SK-N-SH (cell line): ENCODE measurements at regions of chr5 and their contacts with region 1.

Region 1: GRCh38 chr5:14399054-14399692 is 182.4 kb upstream of the OTULINL start:
- DNase-seq: peak; percentile 56
- H3K4me3 ChIP-seq: no peak overlapping the region; a peak in 1 of 4 replicates
- H3K27ac ChIP-seq: peak overlapping the region; percentile 89 to 96
- H3K4me1 ChIP-seq: peaks cover 53 to 55% of the 10 kb centered on the region in 2 experiments
- H3K27me3 ChIP-seq: no peaks in the 10 kb centered on the region
- CTCF ChIP-seq: peak; percentile 87
- EP300 ChIP-seq: no peak
- RAD21 ChIP-seq: peak; percentile 83

Region 2: GRCh38 chr5:14332746-14333145 is 66.4 kb before region 1 on chr5:
- CTCF ChIA-PET with region 1: no interaction called
- POLR2A ChIA-PET with region 1: no interaction called
- DNase-seq: no peak
- H3K4me3 ChIP-seq: no peak overlapping the region
- H3K27ac ChIP-seq: no peak overlapping the region
- H3K4me1 ChIP-seq: no peaks in the 10 kb centered on the region; a peak in 1 of 4 replicates
- H3K27me3 ChIP-seq: no peaks in the 10 kb centered on the region
- CTCF ChIP-seq: no peak
- EP300 ChIP-seq: no peak
- RAD21 ChIP-seq: no peak

Region 3: DNA sequence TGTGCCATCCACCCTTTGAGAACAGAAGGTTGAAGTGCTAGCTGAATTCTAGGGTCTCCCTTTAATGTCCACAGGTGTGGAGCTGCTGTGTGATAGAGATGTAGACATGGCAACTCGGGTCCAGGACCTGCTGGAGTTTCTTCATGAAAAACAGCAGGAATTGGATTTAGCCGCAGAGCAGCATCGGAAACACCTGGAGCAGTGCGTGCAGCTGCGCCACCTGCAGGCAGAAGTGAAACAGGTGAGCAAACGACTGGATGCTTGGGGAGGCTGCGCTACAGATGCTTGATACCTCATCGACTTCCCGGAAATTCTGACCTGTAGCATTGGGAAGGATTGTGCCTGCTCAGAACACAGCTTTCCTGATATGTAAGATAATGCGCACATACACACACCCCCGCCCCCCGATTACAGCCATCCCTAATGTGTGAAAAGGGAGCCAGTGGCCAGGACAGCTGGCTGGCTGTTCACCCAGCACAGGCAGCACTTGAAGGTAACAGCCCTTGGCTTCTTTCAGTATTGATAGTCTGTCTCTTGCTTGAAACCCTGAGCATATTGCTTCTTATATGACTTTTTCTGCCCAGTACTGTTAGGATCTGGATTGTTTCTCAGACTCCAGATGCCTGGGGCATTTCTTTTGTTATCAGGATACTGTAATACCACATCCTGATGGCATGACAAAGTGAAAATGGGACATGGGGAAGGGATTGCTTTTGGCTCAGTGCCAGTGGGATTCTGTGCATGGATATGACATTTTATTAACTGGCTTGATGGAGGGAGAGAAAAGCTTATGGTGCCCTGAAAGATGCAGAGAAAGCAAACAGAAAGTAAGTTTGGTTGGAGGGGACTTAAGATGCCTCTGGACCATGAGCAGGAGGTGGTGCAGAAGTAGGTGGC is 34.3 kb before region 1 on chr5:
- CTCF ChIA-PET with region 1: interaction called, 22 read pairs
- POLR2A ChIA-PET with region 1: no interaction called
- DNase-seq: peak; percentile 59
- H3K4me3 ChIP-seq: no peak overlapping the region
- H3K27ac ChIP-seq: peak overlapping the region in 1 of 2 experiments; percentile 28; a peak in 1 of 4 replicates
- H3K4me1 ChIP-seq: peaks cover 0 to 11% of the 10 kb centered on the region in 2 experiments; a peak in 2 of 4 replicates
- H3K27me3 ChIP-seq: no peaks in the 10 kb centered on the region
- CTCF ChIP-seq: peak; percentile 60
- EP300 ChIP-seq: no peak
- RAD21 ChIP-seq: no peak

Region 4: DNA sequence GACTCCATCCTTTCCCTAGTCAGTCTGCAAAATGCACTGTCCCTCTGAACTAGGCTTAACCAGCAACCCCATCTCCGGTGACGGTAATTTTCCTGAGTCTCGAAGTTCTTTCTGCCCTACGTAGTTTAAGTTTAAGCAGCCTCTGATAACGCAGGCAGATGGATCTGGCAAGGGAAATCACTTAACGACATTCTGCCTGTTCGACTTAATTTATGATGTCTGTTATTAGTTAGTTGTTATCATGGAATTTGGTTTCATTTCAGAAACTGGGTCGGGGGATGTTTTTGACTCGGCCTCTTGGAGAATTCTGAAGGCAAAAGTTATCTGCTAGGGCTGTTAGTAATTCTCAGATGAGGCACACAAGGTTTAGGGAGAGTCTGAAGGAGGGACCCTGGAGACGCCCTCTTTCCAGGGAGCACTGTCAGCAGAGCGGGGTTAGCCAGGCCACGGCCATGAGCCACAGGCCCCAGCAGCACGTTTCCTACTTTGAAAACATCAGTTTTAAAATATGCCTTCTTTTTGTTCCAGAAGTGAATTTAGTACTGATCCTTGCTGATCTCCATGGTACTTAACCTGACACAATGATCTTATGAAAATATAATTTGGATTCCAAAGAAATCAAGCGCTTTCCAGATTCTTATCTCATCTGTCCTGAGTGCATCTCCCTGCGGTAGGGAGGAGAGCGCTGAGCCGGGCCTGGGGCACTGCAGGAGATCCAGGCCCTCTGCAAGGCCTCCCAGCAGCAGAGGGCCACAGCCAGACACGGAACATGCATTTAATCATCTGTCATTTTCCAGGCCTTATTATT is 11.4 kb after region 1 on chr5:
- CTCF ChIA-PET with region 1: interaction called, 15 read pairs
- POLR2A ChIA-PET with region 1: interaction called, 3 read pairs
- DNase-seq: peak; percentile 82
- H3K4me3 ChIP-seq: peak overlapping the region in 1 of 2 experiments; percentile 12; a peak in 3 of 4 replicates
- H3K27ac ChIP-seq: peak overlapping the region; percentile 98 to 100
- H3K4me1 ChIP-seq: peaks cover 49 to 76% of the 10 kb centered on the region in 2 experiments
- H3K27me3 ChIP-seq: no peaks in the 10 kb centered on the region
- CTCF ChIP-seq: no peak; the same call in 1 of the 2 replicates
- EP300 ChIP-seq: peak; percentile 64 to 95
- RAD21 ChIP-seq: peak; percentile 42

Region 5: DNA sequence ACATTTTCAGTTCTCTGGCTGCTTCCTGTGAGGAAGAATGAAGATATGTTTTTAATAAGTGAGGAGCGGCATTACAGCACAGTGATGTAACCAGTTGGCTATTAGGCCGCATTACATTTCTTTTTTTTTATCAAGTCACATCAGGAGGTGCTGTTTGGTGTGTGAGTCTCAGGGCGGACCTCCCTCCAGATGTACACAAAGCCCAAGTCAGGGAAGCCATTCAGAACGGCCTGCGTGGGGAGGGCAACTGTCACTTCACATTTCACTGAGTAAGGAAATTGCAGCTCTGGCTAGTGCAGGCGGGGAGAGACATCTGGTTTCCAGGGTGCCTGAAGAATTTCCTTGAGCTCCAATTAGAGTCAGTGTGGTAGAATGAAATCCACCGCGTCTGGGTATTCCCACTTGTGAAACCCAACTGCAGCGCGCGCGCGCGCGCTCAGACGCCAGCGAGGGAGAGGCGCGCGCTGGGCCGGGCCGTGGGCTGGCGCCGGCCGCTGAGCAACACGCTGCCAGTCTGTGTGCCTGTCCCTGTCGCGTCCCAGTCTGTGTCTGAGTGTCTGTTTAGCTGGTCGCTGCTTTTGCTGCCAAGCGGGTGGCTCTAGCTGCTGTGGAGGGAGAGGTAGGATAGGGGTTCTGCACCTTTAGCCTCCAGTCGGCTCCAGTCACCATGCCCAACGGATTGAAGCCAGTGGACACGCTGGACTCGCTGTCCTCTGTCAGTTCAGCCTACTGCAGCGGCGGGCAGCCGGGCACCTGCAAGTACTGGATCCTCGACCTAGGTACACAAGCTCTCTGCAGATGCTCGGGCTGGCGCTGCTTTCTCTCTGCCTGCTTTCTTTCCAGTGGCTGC is 41.6 kb after region 1 on chr5:
- CTCF ChIA-PET with region 1: interaction called, 18 read pairs
- POLR2A ChIA-PET with region 1: interaction called, 5 read pairs
- DNase-seq: peak; percentile 83
- H3K4me3 ChIP-seq: peak overlapping the region; percentile 80 to 84
- H3K27ac ChIP-seq: peak overlapping the region; percentile 98 to 100
- H3K4me1 ChIP-seq: peaks cover 37 to 38% of the 10 kb centered on the region in 2 experiments
- H3K27me3 ChIP-seq: no peaks in the 10 kb centered on the region
- CTCF ChIP-seq: no peak
- EP300 ChIP-seq: peak; percentile 80 to 87; a peak in 3 of 4 replicates
- RAD21 ChIP-seq: peak; percentile 32

Region 6: DNA sequence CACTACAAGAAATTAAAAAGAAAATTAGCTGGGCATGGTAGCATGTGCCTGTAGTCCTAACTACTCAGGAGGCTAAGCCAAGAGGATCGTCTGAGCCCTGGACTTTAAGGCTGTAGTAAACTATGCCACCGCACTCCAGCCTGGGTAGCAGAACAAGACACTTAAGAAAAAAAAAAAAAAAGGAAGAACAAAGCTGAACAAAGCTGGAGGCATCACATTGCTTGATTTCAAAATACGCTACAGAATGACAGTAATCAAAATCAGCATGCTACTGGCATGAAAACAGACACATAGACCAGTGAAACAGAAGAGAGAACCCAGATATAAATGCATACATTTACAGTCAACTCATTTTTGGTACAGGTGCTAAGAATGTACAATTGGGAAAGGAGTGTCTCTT is 250.9 kb after region 1 on chr5:
- CTCF ChIA-PET with region 1: interaction called, 100 read pairs
- POLR2A ChIA-PET with region 1: interaction called, 3 read pairs
- DNase-seq: no peak
- H3K4me3 ChIP-seq: no peak overlapping the region
- H3K27ac ChIP-seq: no peak overlapping the region
- H3K4me1 ChIP-seq: no peaks in the 10 kb centered on the region
- H3K27me3 ChIP-seq: peaks cover 6% of the 10 kb centered on the region; the same call in 1 of the 2 replicates
- CTCF ChIP-seq: no peak
- EP300 ChIP-seq: no peak
- RAD21 ChIP-seq: no peak